Endothelial cell of umbilical vein (primary cell): ENCODE measurements at regions of chr11 and their contacts with region 1.

Region 1: GRCh38 chr11:56783448-56784041 is 35.0 kb upstream of the OR9G4 start:
- DNase-seq: peak; percentile 36
- H3K4me3 ChIP-seq: no peak overlapping the region
- H3K27ac ChIP-seq: no peak overlapping the region
- H3K4me1 ChIP-seq: no peaks in the 10 kb centered on the region
- H3K27me3 ChIP-seq: no peaks in the 10 kb centered on the region
- CTCF ChIP-seq: peak; percentile 18 to 27
- POLR2A ChIP-seq: no peak

Region 2: GRCh38 chr11:55942785-55943392 is 840.7 kb before region 1 on chr11:
- CTCF ChIA-PET with region 1: no interaction called
- POLR2A ChIA-PET with region 1: no interaction called
- dilution Hi-C with region 1: no loop called
- intact Hi-C with region 1: loop called (anchors 2 kb)
- DNase-seq: peak; percentile 10
- H3K4me3 ChIP-seq: no peak overlapping the region
- H3K27ac ChIP-seq: no peak overlapping the region
- H3K4me1 ChIP-seq: no peaks in the 10 kb centered on the region
- H3K27me3 ChIP-seq: no peaks in the 10 kb centered on the region
- CTCF ChIP-seq: no peak
- POLR2A ChIP-seq: no peak

Region 3: GRCh38 chr11:56764976-56765375 is 18.6 kb before region 1 on chr11:
- CTCF ChIA-PET with region 1: no interaction called
- POLR2A ChIA-PET with region 1: no interaction called
- dilution Hi-C with region 1: no loop called
- intact Hi-C with region 1: no loop called
- DNase-seq: no peak
- H3K4me3 ChIP-seq: no peak overlapping the region
- H3K27ac ChIP-seq: no peak overlapping the region
- H3K4me1 ChIP-seq: no peaks in the 10 kb centered on the region
- H3K27me3 ChIP-seq: no peaks in the 10 kb centered on the region
- CTCF ChIP-seq: no peak
- POLR2A ChIP-seq: no peak